H1 (cell line): ENCODE measurements at regions of chr11 and their contacts with region 1.

Region 1: GRCh38 chr11:110199184-110199941 is 97.1 kb downstream of the RDX start:
- DNase-seq: peak in 1 of 2 experiments; percentile 37
- H3K4me3 ChIP-seq: no peak overlapping the region
- H3K27ac ChIP-seq: no peak overlapping the region
- H3K4me1 ChIP-seq: peaks cover 0 to 8% (median 4%) of the 10 kb centered on the region in 4 experiments; a peak in 6 of 7 replicates
- H3K27me3 ChIP-seq: no peaks in the 10 kb centered on the region
- CTCF ChIP-seq: no peak
- EP300 ChIP-seq: no peak
- POLR2A ChIP-seq: no peak
- RAD21 ChIP-seq: no peak

Region 2: DNA sequence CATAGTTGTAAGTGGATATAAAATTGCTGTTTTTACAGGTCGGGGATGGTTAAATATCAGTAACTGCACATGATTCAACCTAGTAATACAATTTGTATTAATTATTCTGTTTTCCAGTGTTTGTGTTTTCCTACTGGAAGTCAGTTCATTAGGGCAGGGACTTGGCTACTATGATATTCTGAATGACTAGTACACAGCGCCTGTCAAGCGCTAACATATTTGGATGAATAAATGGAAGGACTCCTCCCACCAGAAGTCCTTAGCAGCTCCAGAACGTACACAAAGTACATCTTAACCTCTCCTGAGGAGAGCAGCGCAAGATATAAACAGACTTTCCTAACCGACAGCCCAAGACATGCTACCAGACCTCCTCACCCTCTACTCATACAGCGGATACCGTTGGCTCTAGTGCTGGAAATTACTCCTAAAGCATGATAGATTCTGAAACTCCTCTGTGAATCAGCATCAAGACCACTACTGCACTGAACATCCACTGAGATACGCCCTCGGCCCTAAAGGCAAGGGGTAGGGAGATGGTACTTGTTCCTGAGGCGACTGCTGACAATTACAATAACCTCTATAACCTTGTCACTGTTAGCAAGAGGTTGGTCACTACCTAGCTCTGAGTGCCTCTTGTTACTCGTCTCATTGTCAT is 18.0 kb after region 1 on chr11:
- CTCF ChIA-PET with region 1: interaction called, 14 read pairs
- POLR2A ChIA-PET with region 1: no interaction called
- DNase-seq: no peak
- H3K4me3 ChIP-seq: no peak overlapping the region
- H3K27ac ChIP-seq: no peak overlapping the region
- H3K4me1 ChIP-seq: no peaks in the 10 kb centered on the region
- H3K27me3 ChIP-seq: no peaks in the 10 kb centered on the region
- CTCF ChIP-seq: no peak
- EP300 ChIP-seq: no peak
- POLR2A ChIP-seq: no peak
- RAD21 ChIP-seq: no peak

Region 3: GRCh38 chr11:110367571-110367970 is 168.2 kb after region 1 on chr11:
- CTCF ChIA-PET with region 1: interaction called, 13 read pairs
- POLR2A ChIA-PET with region 1: no interaction called
- DNase-seq: no peak
- H3K4me3 ChIP-seq: no peak overlapping the region
- H3K27ac ChIP-seq: no peak overlapping the region
- H3K4me1 ChIP-seq: peaks cover 0 to 6% (median 4%) of the 10 kb centered on the region in 4 experiments; a peak in 4 of 7 replicates
- H3K27me3 ChIP-seq: no peaks in the 10 kb centered on the region
- CTCF ChIP-seq: no peak
- EP300 ChIP-seq: no peak
- POLR2A ChIP-seq: no peak
- RAD21 ChIP-seq: no peak

Region 4: GRCh38 chr11:110429731-110430266 is 230.4 kb after region 1 on chr11 and contains the start of gene FDX1:
- CTCF ChIA-PET with region 1: interaction called, 130 read pairs
- POLR2A ChIA-PET with region 1: interaction called, 4 read pairs
- DNase-seq: peak; percentile 50 to 86
- H3K4me3 ChIP-seq: peak within 1 kb of the TSS; percentile 81 to 92 (median 88)
- H3K27ac ChIP-seq: peak within 1 kb of the TSS; percentile 75; the same call in 1 of the 2 replicates
- H3K4me1 ChIP-seq: peaks cover 0 to 7% (median 2%) of the 10 kb centered on the region in 4 experiments; a peak in 4 of 7 replicates
- H3K27me3 ChIP-seq: no peaks in the 10 kb centered on the region; a peak in 1 of 7 replicates
- CTCF ChIP-seq: peak; percentile 45 to 68 (median 66)
- EP300 ChIP-seq: no peak
- POLR2A ChIP-seq: peak; percentile 48 to 80; a peak in 2 of 3 replicates
- RAD21 ChIP-seq: peak in 1 of 2 experiments; percentile 38; a peak in 2 of 4 replicates
- total RNA-seq, gene FDX1: 9.4 and 9.6 TPM in 2 replicates

Region 5: DNA sequence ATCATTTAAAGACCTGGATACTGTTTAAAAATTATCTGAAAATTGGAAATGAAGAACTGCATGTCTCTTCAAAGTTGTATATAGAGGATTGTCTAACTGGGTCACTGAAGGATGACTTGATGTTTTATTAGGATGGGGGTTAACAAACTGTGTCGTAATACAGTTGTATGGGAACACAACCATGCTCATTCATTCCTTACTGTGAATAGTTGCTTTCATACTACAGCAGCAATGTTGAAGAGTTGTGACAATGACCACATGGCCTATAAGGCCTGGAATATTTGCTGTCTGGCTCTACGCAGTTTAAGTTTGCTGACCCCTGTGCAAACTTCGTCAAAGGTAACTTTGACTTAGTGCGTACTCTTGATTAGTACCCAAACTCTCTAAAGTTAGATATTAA is 268.8 kb after region 1 on chr11:
- CTCF ChIA-PET with region 1: no interaction called
- POLR2A ChIA-PET with region 1: no interaction called
- DNase-seq: no peak
- H3K4me3 ChIP-seq: no peak overlapping the region
- H3K27ac ChIP-seq: no peak overlapping the region
- H3K4me1 ChIP-seq: no peaks in the 10 kb centered on the region
- H3K27me3 ChIP-seq: no peaks in the 10 kb centered on the region
- CTCF ChIP-seq: no peak
- EP300 ChIP-seq: no peak
- POLR2A ChIP-seq: no peak
- RAD21 ChIP-seq: no peak